ENCODE measurements at regions of chr11 and their contacts with region 1.

Region 1: GRCh38 chr11:9210922-9211320 is 54.2 kb downstream of the DENND5A start:
- DNase-seq: peak; percentile 41
- ATAC-seq: peak; percentile 39
- H3K4me3 Mint-ChIP-seq: no peak overlapping the region
- H3K27ac Mint-ChIP-seq: peak overlapping the region; percentile 76
- H3K4me1 Mint-ChIP-seq: peaks cover 68% of the 10 kb centered on the region
- H3K27me3 Mint-ChIP-seq: no peaks in the 10 kb centered on the region

Region 2: GRCh38 chr11:9025101-9025850 is 185.6 kb before region 1 on chr11:
- CTCF ChIA-PET with region 1: no interaction called
- POLR2A ChIA-PET with region 1: no interaction called
- intact Hi-C with region 1: no loop called
- DNase-seq: no peak
- ATAC-seq: no peak
- H3K4me3 Mint-ChIP-seq: no peak overlapping the region
- H3K27ac Mint-ChIP-seq: no peak overlapping the region
- H3K4me1 Mint-ChIP-seq: no peaks in the 10 kb centered on the region
- H3K27me3 Mint-ChIP-seq: peaks cover 11% of the 10 kb centered on the region

Region 3: GRCh38 chr11:9170450-9170849 is 40.5 kb before region 1 on chr11:
- CTCF ChIA-PET with region 1: interaction called, 3 read pairs
- POLR2A ChIA-PET with region 1: interaction called, 4 read pairs
- intact Hi-C with region 1: loop called in 1 of 2 experiments (anchors 5 kb)
- DNase-seq: no peak
- ATAC-seq: no peak
- H3K4me3 Mint-ChIP-seq: no peak overlapping the region
- H3K27ac Mint-ChIP-seq: no peak overlapping the region
- H3K4me1 Mint-ChIP-seq: peaks cover 13% of the 10 kb centered on the region
- H3K27me3 Mint-ChIP-seq: no peaks in the 10 kb centered on the region

Region 4: DNA sequence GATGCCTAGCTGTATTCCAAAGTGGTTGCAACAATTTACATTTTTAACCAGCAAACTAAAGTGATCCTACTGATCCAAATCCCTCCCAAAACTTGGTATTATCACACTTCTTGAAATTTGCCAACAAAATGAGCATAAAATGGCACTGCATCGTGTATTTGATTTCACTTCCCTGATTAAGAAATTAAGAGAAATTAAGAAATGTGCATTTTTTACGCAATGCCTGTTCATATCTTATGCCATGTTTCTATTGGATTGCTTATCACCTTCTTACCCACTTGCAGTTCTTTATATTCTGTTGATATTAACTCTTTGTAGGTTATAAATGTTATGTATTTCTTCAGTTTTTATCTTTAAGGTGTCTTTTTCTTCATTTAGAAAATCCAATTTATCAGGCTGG is 26.4 kb before region 1 on chr11:
- CTCF ChIA-PET with region 1: no interaction called
- POLR2A ChIA-PET with region 1: no interaction called
- intact Hi-C with region 1: no loop called
- DNase-seq: no peak
- ATAC-seq: no peak
- H3K4me3 Mint-ChIP-seq: no peak overlapping the region
- H3K27ac Mint-ChIP-seq: no peak overlapping the region
- H3K4me1 Mint-ChIP-seq: no peaks in the 10 kb centered on the region
- H3K27me3 Mint-ChIP-seq: no peaks in the 10 kb centered on the region

Region 5: DNA sequence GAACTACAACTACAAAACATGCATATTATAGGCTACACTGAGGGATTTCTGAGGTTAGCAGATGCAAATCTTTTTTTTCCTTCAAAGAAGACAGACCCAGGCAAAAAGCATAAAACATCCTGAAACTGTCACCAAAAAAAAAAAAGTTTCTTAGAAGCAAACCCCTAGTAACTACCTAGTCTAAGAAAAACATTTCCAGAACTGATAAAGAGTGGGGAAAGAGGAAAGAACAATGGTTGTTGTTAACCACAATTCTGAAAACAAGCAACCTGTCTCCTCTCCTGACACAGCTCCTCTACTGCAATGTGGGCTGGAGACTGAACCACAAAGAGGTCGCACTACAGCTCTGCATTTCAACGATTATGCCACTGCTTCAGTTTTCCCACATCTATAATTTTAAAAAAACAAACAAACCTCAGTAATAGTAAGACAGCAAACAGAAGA is 39.2 kb after region 1 on chr11:
- CTCF ChIA-PET with region 1: no interaction called
- POLR2A ChIA-PET with region 1: interaction called, 6 read pairs
- intact Hi-C with region 1: loop called (anchors 1 to 2 kb)
- DNase-seq: peak; percentile 50
- ATAC-seq: peak; percentile 72
- H3K4me3 Mint-ChIP-seq: peak overlapping the region; percentile 18
- H3K27ac Mint-ChIP-seq: peak overlapping the region; percentile 42
- H3K4me1 Mint-ChIP-seq: peaks cover 69% of the 10 kb centered on the region
- H3K27me3 Mint-ChIP-seq: no peaks in the 10 kb centered on the region

Region 6: GRCh38 chr11:9363954-9364912 is 153.3 kb after region 1 on chr11:
- CTCF ChIA-PET with region 1: no interaction called
- POLR2A ChIA-PET with region 1: no interaction called
- intact Hi-C with region 1: loop called in 1 of 2 experiments (anchors 5 kb)
- DNase-seq: peak; percentile 92
- ATAC-seq: peak; percentile 88
- H3K4me3 Mint-ChIP-seq: peak overlapping the region; percentile 62
- H3K27ac Mint-ChIP-seq: peak overlapping the region; percentile 88
- H3K4me1 Mint-ChIP-seq: peaks cover 30% of the 10 kb centered on the region
- H3K27me3 Mint-ChIP-seq: no peaks in the 10 kb centered on the region